ENCODE measurements at regions of chr7 and their contacts with region 1.

Region 1: DNA sequence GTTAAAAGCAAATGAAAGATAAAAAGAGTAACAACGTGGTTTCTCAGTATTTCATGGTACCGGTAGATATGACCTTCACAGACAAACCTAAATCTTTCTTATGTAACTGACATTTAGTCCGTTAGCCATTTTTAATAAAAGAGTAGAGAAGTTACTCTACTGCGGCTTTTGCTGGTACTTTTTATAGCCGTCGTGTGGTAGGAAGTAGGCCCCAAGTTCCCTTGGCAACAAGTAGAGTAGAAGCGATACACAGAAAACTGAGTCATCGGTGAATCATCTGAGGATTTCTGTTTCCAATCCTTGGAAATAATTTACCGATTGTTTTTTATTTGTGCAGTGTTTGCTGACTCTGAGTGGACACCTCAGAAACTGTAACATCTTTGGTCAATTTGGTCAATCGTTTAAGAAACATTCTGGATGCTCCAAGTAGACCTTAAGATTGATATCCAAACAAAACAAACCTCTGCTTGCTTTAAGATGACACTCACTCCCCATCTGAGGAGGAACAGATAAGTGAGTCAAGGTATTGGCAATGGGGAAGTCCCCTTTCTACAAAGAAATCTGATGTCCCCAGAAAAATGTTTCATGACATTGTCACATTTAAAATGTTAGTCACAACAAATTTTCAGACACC is 63.9 kb upstream of the AHR start:
- DNase-seq: peak; percentile 98
- ATAC-seq: peak; percentile 91
- H3K4me3 ChIP-seq: peak overlapping the region; percentile 52
- H3K27ac ChIP-seq: peak overlapping the region; percentile 93
- H3K4me1 ChIP-seq: peaks cover 32% of the 10 kb centered on the region
- H3K27me3 ChIP-seq: no peaks in the 10 kb centered on the region
- CTCF ChIP-seq: 0 out of 2 replicates have a peak, but pooled peaks have one; percentile 9

Region 2: GRCh38 chr7:17041324-17041723 is 193.2 kb before region 1 on chr7:
- CTCF ChIA-PET with region 1: no interaction called
- POLR2A ChIA-PET with region 1: no interaction called
- intact Hi-C with region 1: loop called (anchors 1 kb)
- DNase-seq: peak; percentile 87
- ATAC-seq: peak; percentile 71
- H3K4me3 ChIP-seq: peak overlapping the region; percentile 9; the same call in 1 of the 2 replicates
- H3K27ac ChIP-seq: peak overlapping the region; percentile 80
- H3K4me1 ChIP-seq: peaks cover 53% of the 10 kb centered on the region
- H3K27me3 ChIP-seq: no peaks in the 10 kb centered on the region
- CTCF ChIP-seq: no peak

Region 3: DNA sequence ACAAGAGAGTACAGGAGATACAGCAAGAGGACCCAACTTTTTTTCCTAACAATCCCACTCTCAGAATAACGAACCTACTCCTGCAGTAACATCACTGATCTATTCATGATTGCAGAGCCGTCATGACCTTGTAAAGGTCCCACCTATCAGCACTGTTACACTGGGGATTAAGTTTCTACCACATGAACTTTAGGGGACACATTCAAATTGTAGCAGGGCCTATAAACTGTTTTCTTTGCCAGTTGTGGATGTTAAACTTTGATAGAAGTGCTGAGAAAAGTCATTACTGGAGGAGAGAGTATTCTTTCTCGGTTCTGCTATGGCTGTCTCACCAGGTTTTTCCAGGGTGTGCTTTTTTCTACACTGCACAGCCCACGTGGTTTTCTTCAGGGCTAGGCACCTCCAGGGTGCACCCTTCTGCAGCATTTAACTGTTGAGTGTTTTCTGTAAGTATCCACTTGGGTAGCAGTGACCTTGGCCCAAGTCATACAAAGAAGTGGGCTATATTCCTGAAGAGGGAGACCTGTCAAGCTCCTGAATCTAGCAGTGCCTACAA is 67.6 kb before region 1 on chr7:
- CTCF ChIA-PET with region 1: no interaction called
- POLR2A ChIA-PET with region 1: no interaction called
- intact Hi-C with region 1: no loop called
- DNase-seq: no peak
- ATAC-seq: no peak
- H3K4me3 ChIP-seq: no peak overlapping the region
- H3K27ac ChIP-seq: no peak overlapping the region
- H3K4me1 ChIP-seq: no peaks in the 10 kb centered on the region
- H3K27me3 ChIP-seq: no peaks in the 10 kb centered on the region
- CTCF ChIP-seq: no peak

Region 4: DNA sequence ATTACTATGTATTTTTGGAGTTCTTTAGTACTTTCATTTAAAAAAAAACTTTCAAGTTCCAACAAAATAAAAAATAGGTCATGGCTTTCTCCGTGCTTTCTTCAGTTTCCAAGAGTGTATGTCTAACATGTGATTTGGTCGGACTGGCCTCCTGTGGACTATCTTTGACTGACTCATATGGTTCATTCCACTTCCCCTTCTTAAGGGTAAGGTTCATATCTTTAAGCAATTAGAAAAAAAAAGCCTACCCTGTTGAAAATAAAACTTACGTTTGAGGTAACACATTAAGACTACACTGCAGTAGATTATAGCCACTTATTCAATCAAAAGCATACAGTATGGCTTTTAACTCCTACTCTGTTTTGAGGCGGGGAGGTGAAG is 48.8 kb before region 1 on chr7:
- CTCF ChIA-PET with region 1: no interaction called
- POLR2A ChIA-PET with region 1: no interaction called
- intact Hi-C with region 1: loop called (anchors 1 kb)
- DNase-seq: peak; percentile 65
- ATAC-seq: peak; percentile 93
- H3K4me3 ChIP-seq: no peak overlapping the region
- H3K27ac ChIP-seq: peak overlapping the region; percentile 85
- H3K4me1 ChIP-seq: peaks cover 22% of the 10 kb centered on the region
- H3K27me3 ChIP-seq: no peaks in the 10 kb centered on the region
- CTCF ChIP-seq: no peak

Region 5: GRCh38 chr7:17275749-17276671 is 41.5 kb after region 1 on chr7:
- CTCF ChIA-PET with region 1: no interaction called
- POLR2A ChIA-PET with region 1: no interaction called
- intact Hi-C with region 1: loop called (anchors 1 kb)
- DNase-seq: peak; percentile 92
- ATAC-seq: peak; percentile 91
- H3K4me3 ChIP-seq: peak overlapping the region; percentile 8; the same call in 1 of the 2 replicates
- H3K27ac ChIP-seq: peak overlapping the region; percentile 78
- H3K4me1 ChIP-seq: peaks cover 34% of the 10 kb centered on the region
- H3K27me3 ChIP-seq: no peaks in the 10 kb centered on the region
- CTCF ChIP-seq: no peak